Mammary epithelial cell (primary cell): ENCODE measurements at regions of chr12 and their contacts with region 1.

Region 1: GRCh38 chr12:32718926-32719325 is 36.8 kb downstream of the YARS2 start:
- DNase-seq: peak; percentile 98
- H3K4me3 ChIP-seq: no peak overlapping the region
- H3K27ac ChIP-seq: peak overlapping the region; percentile 100
- H3K4me1 ChIP-seq: peaks cover 24% of the 10 kb centered on the region
- H3K27me3 ChIP-seq: no peaks in the 10 kb centered on the region
- CTCF ChIP-seq: no peak

Region 2: DNA sequence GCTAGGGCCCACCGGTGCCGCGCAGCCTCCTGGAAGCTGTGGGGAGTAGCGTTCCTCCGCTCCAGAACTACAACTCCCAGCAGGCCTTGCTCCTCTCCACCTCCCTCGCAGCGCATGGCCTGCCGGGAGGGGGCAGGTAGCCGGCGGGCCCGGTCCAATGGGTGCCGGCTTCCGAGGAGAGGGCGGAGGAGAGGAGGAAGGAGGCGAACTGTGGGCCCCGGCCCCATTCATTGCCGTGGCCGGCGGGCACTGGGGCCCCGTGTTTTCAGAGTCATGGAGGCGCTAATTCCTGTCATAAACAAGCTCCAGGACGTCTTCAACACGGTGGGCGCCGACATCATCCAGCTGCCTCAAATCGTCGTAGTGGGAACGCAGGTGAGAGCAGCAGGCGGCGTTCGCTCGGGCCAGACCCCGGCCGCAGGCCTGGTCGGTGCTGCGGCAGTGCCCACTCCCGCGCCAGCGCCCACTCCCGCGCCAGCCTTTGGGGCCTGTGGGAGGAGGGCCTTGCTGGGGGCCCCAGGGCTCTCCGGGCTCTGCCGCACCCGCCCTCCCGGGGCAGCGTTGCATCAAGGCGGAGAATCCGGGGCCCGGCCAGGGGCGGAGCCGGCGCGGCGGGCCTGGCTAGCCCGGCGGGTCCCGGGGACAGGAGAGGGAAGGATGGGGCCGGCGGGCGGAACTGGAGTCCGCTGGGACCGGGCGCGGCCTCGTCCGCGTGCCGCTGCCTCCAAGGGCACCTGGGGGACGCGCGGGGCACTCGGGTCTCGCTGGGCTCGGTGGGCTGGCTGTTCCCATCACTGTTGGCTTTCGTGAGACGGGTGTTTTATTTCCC is 39.6 kb before region 1 on chr12 and contains the start of gene DNM1L:
- CTCF ChIA-PET with region 1: no interaction called
- dilution Hi-C with region 1: no loop called
- in situ Hi-C with region 1: no loop called
- intact Hi-C with region 1: loop called (anchors 2 kb)
- DNase-seq: peak; percentile 96
- H3K4me3 ChIP-seq: peak within 1 kb of the TSS; percentile 82 to 100 (median 97)
- H3K27ac ChIP-seq: peak within 1 kb of the TSS; percentile 96
- H3K4me1 ChIP-seq: peaks cover 10% of the 10 kb centered on the region
- H3K27me3 ChIP-seq: no peaks in the 10 kb centered on the region
- CTCF ChIP-seq: peak in 1 of 2 donors; percentile 4
- total RNA-seq, gene DNM1L: 96.9 to 151 TPM

Region 3: GRCh38 chr12:32860182-32860581 is 141.3 kb after region 1 on chr12:
- CTCF ChIA-PET with region 1: no interaction called
- dilution Hi-C with region 1: no loop called
- in situ Hi-C with region 1: no loop called
- intact Hi-C with region 1: no loop called
- DNase-seq: peak; percentile 38
- H3K4me3 ChIP-seq: no peak overlapping the region
- H3K27ac ChIP-seq: no peak overlapping the region
- H3K4me1 ChIP-seq: peaks cover 13% of the 10 kb centered on the region
- H3K27me3 ChIP-seq: no peaks in the 10 kb centered on the region
- CTCF ChIP-seq: no peak

Region 4: DNA sequence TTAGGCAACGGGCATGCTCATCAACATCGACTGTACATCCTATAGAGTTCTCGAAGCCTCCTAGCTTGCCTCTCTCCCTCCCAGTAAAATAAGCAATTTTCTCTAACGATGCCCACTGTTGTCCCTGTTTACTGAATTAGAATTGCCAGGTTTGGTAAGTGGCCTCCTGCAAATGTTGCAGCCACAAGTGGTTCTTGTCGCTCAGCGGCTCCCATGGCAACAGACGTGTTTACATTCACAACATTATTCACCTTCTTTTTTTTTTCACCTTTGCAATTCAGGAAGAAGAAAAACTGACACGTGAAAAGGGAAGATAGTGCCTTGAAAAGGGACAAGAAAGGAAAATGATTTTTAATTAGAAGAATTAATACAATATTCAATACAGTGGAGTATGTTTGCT is 278.5 kb after region 1 on chr12:
- CTCF ChIA-PET with region 1: no interaction called
- dilution Hi-C with region 1: no loop called
- in situ Hi-C with region 1: no loop called
- intact Hi-C with region 1: no loop called
- DNase-seq: no peak
- H3K4me3 ChIP-seq: no peak overlapping the region
- H3K27ac ChIP-seq: no peak overlapping the region
- H3K4me1 ChIP-seq: no peaks in the 10 kb centered on the region
- H3K27me3 ChIP-seq: no peaks in the 10 kb centered on the region
- CTCF ChIP-seq: no peak

Region 5: DNA sequence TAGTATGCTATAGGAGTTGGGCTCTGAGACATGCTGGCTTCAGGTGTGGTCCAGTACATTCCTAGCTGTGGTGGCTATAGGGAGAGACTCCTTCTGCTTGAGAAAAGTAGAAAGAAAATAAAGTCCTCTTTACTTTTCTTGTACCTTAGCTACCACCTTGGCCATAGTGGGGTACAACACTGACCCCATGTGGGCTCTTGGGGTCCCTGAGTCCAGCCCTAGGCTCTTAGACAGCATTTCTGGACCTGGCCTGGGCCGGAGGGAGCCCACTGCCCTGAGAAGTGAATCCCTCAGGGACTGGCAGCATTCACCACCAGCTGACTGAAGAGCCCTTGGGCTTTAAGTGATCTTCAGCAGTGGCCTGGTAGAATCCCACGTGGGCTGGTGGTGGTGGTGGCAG is 577.6 kb after region 1 on chr12:
- CTCF ChIA-PET with region 1: no interaction called
- dilution Hi-C with region 1: no loop called
- in situ Hi-C with region 1: no loop called
- intact Hi-C with region 1: no loop called
- DNase-seq: no peak
- H3K4me3 ChIP-seq: no peak overlapping the region
- H3K27ac ChIP-seq: no peak overlapping the region
- H3K4me1 ChIP-seq: no peaks in the 10 kb centered on the region
- H3K27me3 ChIP-seq: no peaks in the 10 kb centered on the region
- CTCF ChIP-seq: no peak